GM18951 (cell line): ENCODE measurements at regions of chr7 and their contacts with region 1.

Region 1: DNA sequence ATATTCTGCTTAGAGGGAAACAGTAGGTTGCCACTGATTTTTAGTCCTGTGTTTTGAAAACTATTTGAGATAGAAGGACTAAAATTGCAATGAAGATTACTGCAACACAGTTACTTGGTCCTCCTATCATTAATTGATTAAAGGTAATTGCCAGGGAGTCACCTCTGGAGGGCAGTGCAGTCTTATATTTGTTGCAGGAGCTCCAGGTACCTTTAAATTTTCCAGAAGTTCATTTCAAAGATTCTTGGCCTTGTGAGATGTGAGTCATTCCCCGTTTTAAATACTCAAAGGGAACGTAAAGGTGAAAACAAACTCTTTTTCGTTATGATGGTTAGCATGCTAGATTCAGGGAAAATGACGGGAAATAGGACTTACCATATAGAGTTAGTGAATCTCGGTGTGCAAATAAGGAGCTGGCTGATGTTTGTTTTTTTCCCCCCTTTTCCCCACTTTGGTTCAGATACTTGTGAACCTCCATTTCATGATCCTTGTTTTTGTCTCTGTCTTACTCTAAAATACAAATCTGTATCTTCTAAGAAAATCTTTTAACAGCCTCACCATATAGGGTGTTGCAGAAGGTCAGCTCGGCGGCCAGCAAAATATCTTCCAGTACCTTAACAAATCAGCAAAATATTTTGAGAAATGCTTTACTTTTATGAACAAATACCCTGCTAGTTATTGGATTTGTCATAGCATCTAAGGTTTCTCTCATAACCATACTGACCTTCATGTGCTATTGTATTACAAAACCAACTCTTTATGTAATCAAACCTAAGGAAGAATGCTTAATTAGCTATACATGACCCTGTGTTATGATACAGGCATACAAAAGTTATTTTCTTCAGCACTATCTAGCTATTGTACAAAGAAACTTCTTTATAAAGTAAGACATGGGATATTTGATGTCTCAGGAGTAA is 143.0 kb upstream of the HDAC9 start:
- POLR2A ChIP-seq: no peak

Region 2: GRCh38 chr7:18541181-18541870 is 188.7 kb after region 1 on chr7:
- in situ Hi-C with region 1: no loop called
- POLR2A ChIP-seq: no peak

Region 3: GRCh38 chr7:18623389-18623788 is 270.8 kb after region 1 on chr7:
- in situ Hi-C with region 1: no loop called
- POLR2A ChIP-seq: no peak

Region 4: GRCh38 chr7:18666107-18666728 is 313.6 kb after region 1 on chr7:
- in situ Hi-C with region 1: loop called (anchors 10 kb)
- POLR2A ChIP-seq: no peak

Region 5: GRCh38 chr7:19051767-19052375 is 699.3 kb after region 1 on chr7:
- in situ Hi-C with region 1: loop called (anchors 25 kb)
- POLR2A ChIP-seq: no peak